Sigmoid colon (tissue), 7 donors: ENCODE measurements at regions of chr11 and their contacts with region 1.

Region 1: GRCh38 chr11:123110356-123110755 is 48.4 kb upstream of the HSPA8 start:
- DNase-seq: no peak
- H3K4me3 ChIP-seq: no peak overlapping the region
- H3K27ac ChIP-seq: peak overlapping the region in 2 of 4 donors; percentile 47 to 59
- H3K4me1 ChIP-seq: peaks cover 0 to 44% (median 34%) of the 10 kb centered on the region in 4 donors
- H3K27me3 ChIP-seq: no peaks in the 10 kb centered on the region
- CTCF ChIP-seq: no peak
- EP300 ChIP-seq: no peak
- POLR2A ChIP-seq: no peak

Region 2: DNA sequence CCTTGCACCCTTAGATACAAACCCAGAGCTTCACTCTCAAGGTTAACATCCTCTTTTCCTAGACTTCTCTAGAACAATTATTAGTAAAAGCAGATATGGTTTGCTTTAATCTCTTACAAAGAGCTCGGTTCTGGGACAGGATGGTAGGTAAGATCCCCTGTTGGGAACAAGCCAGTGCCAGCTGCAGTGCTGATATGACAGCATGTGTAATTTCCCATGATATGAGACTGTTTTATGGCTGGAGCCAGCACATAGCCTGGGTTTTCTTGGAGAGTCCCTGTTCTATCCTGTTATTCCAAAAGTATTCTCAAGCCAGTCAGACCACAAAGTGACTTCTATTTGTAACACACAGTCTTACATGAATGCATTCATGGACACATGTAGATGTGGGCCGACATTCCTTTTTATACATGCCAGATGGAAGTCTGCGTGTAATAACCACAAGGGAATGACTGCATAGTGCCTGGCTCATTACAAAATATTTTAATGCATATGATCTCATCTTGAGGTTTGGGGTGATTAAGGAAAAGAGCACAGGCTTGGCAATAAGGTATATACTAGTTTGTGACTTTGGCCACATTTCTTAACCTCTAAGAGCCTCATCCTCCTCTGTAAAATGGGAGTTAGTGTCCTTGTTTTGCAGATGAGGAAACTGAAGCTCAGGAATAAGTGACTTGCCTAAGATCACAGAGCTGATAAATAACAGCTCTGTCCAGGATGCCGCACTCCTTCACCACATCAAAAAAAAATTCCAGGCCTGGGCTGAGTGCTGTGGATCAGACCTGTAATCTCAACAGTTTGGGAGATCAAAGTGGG is 62.9 kb after region 1 on chr11:
- intact Hi-C with region 1: loop called (anchors 2 kb)
- DNase-seq: no peak
- H3K4me3 ChIP-seq: no peak overlapping the region
- H3K27ac ChIP-seq: peak overlapping the region; percentile 75 to 97 (median 90)
- H3K4me1 ChIP-seq: peaks cover 0 to 73% (median 61%) of the 10 kb centered on the region in 4 donors
- H3K27me3 ChIP-seq: no peaks in the 10 kb centered on the region
- CTCF ChIP-seq: no peak
- EP300 ChIP-seq: no peak
- POLR2A ChIP-seq: no peak

Region 3: DNA sequence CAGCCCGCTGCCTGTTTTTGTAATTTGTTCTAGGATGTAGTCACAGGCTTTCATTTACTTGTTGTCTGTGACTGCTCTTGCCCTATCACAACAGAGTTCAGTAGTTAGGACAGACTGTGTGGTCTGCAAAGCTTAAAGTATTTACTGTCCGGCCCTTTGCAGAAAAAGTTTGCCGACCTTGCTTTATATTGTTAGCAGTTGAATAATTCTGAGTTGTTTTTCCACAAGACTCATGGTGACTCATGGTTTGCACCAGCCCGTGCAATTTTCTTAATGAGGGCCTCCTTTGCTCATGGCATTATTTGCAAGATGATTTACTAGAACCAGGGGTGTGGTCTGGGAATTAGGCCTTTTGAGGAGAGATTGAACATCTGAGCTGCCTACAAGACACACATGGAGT is 433.4 kb after region 1 on chr11:
- intact Hi-C with region 1: no loop called
- DNase-seq: no peak
- H3K4me3 ChIP-seq: no peak overlapping the region
- H3K27ac ChIP-seq: no peak overlapping the region
- H3K4me1 ChIP-seq: no peaks in the 10 kb centered on the region
- H3K27me3 ChIP-seq: no peaks in the 10 kb centered on the region
- CTCF ChIP-seq: no peak
- EP300 ChIP-seq: no peak
- POLR2A ChIP-seq: no peak